Adrenal gland (tissue), 19 donors: ENCODE measurements at regions of chr18 and their contacts with region 1.

Region 1: DNA sequence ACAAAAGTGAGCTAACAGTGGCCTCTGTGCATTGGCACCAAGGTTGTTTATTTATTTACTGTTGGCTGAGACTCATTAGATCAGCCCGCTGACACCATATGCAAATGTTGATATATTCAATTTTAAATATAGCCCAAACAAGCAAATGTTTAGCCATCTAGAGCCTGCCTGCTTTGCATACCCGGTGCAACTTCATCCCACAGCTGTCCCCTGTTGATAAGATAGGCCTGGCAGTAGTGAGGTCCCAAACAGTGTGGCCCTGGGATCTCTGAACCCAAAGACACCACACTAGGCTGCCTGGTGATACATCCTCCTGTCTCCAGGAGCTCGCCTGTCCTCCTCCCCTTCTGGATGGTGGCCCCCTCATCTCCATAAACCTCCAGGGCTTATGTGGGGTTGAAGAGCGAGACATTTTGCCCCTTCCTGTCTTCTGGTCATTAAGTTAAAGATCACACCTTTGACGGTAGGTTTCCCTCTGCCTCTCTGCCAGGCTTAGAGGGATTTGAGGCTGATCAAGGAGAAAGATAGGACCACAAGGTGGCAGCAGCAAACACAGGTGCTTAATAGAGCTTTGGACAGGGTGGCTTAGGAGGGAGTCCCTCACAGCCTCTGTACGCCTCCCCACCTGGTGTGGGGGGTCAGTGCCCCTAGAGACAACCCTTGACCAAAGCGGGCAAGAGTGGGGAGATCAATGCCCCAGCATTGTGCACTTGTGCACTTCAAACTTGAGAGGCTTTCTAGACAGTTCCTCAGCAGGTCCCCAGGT is 23.7 kb upstream of the MYO5B start:
- DNase-seq: peak in 3 of 7 donors; percentile 24 to 54 (median 50)
- H3K4me3 ChIP-seq: no peak overlapping the region
- H3K27ac ChIP-seq: no peak overlapping the region
- H3K4me1 ChIP-seq: no peaks in the 10 kb centered on the region
- H3K27me3 ChIP-seq: peaks cover 3% of the 10 kb centered on the region
- CTCF ChIP-seq: peak in 5 of 6 experiments; percentile 8 to 47 (median 40)
- POLR2A ChIP-seq: no peak

Region 2: DNA sequence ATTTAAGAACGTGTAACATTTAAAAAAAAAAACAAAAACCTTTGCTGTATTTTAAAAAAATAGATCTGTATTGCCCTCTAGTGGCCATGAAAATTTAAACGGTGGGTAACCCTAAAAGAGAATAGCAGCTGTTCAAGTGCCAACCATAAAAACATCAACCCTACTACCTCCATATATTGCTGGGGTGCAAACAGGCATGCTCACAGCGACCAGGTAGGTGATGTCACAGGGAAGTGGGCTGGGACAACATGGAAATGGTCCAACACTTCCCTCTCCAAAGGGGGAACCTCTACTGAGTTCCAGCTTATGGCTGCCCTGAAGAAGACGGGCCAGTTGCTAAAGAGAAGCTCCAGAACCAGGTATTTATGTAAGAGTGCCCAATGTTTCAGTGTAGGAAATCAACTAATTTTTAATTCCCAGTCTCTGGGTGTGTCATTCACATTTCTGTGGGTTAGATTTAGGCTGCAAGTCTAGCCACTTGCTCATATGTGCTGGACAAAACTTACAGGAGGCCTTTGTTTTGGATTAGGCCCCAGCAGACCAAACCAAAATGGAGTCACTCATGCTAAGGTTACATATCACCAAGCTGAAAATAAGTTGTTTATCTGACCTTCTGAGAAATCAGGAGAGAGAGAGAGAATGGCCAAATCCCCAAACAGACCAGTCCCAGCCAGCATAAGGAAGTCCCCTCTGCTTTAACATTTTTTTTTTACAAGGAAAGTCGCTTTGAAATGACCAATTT is 210.8 kb after region 1 on chr18:
- intact Hi-C with region 1: loop called (anchors 5 kb)
- DNase-seq: peak in 1 of 7 donors; percentile 21
- H3K4me3 ChIP-seq: no peak overlapping the region
- H3K27ac ChIP-seq: no peak overlapping the region
- H3K4me1 ChIP-seq: peaks cover 0 to 3% of the 10 kb centered on the region in 2 donors
- H3K27me3 ChIP-seq: no peaks in the 10 kb centered on the region
- CTCF ChIP-seq: peak; percentile 19 to 62 (median 53)
- POLR2A ChIP-seq: no peak